ENCODE measurements at regions of chr14 and their contacts with region 1.

Region 1: GRCh38 chr14:106417224-106418049 is 891.1 kb downstream of the TMEM121 start:
- DNase-seq: peak; percentile 92
- ATAC-seq: peak; percentile 92
- H3K4me3 Mint-ChIP-seq: no peak overlapping the region
- H3K27ac Mint-ChIP-seq: no peak overlapping the region
- H3K4me1 Mint-ChIP-seq: no peaks in the 10 kb centered on the region
- H3K27me3 Mint-ChIP-seq: peaks cover 16% of the 10 kb centered on the region

Region 2: DNA sequence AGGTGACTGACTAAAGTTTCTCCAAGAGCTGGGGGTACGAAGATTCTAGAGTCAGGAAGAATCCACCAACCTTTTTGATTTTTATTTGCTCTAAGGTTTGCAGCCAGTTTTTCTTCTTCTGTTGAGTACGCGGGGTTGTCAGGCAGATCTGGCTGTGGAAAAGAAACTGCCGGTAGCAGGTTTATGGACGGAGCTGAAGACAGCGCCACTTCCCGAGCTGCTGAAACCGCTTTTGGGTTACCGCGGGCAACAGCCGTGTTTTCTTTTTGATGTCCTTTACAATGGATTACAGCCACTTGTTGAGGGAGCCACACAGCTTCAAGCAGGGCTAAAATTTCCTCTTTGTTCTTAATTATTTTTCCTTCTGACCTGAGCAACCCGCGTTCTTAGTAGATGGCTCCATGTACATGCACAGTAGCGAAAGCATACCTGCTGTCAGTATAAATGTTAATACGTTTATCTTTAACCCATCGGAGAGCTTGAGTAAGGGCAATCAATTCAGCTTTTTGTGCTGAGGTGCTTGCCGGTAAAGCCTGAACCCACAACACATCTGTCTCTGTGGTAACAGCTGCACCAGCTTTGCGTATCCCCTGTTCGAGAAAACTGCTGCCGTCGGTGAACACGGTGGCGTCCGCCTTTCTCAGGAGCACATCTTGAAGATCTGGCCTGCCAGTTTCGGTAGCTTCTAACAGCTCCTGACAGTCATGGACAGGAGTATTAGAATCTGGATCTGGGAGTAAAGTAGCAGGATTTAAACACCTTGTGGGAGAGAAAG is 216.7 kb before region 1 on chr14:
- CTCF ChIA-PET with region 1: no interaction called
- POLR2A ChIA-PET with region 1: no interaction called
- DNase-seq: peak; percentile 44
- ATAC-seq: peak; percentile 63
- H3K4me3 Mint-ChIP-seq: peak overlapping the region; percentile 48
- H3K27ac Mint-ChIP-seq: peak overlapping the region; percentile 46
- H3K4me1 Mint-ChIP-seq: peaks cover 18% of the 10 kb centered on the region
- H3K27me3 Mint-ChIP-seq: peaks cover 24% of the 10 kb centered on the region

Region 3: GRCh38 chr14:106347890-106348755 is 69.3 kb before region 1 on chr14:
- CTCF ChIA-PET with region 1: interaction called, 36 read pairs
- POLR2A ChIA-PET with region 1: no interaction called
- DNase-seq: no peak
- ATAC-seq: no peak
- H3K4me3 Mint-ChIP-seq: no peak overlapping the region
- H3K27ac Mint-ChIP-seq: no peak overlapping the region
- H3K4me1 Mint-ChIP-seq: peaks cover 16% of the 10 kb centered on the region
- H3K27me3 Mint-ChIP-seq: peaks cover 39% of the 10 kb centered on the region

Region 4: DNA sequence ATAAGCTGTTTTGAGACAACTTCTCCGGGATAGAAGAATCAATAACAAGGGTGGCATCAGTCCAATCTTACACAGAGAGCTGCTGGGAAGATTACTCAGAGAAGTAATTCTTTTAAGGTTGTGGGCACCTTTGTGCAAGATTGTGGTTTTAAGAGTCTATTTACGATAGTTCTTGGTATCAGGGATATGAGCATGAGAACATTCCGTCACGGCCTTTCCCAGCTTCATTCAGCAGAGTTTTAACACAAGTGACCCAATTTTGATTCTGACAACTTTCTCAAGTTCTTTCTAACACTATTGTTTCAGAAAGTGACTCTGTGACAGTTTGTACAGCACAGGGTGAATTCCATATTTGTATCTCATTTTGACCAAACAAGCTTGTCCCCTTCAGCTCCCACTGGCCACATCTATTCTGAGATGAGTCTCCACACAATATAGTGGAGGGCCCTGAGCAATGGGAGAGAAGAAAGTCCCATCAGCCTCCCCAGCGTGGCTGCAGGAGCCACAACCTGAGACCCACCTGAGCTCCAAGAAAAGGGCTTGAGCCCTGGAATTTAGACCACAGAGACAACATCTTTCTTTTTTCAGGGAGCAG is 21.9 kb before region 1 on chr14:
- CTCF ChIA-PET with region 1: interaction called, 53 read pairs
- POLR2A ChIA-PET with region 1: no interaction called
- DNase-seq: no peak
- ATAC-seq: no peak
- H3K4me3 Mint-ChIP-seq: peak overlapping the region; percentile 53
- H3K27ac Mint-ChIP-seq: peak overlapping the region; percentile 73
- H3K4me1 Mint-ChIP-seq: peaks cover 45% of the 10 kb centered on the region
- H3K27me3 Mint-ChIP-seq: peaks cover 20% of the 10 kb centered on the region

Region 5: DNA sequence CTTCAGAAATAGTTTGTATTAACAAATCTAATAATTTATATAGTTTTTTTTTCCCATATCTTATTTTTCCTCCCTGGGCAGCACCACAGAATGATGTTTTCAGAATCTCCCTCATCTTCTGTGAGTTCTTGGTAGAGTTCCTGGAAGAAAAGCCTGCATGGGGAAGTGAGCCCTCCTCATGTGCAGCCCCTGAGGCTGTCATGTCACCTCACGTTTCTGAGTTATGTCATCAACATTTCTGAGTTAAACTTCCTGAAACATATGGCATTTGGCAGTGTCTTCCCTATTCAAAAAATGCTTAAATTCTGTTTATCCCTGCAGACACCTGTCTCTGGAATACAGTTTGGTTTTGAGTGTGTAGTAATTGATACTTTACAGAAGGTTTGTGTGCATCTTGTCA is 87.9 kb after region 1 on chr14:
- CTCF ChIA-PET with region 1: interaction called, 115 read pairs
- POLR2A ChIA-PET with region 1: no interaction called
- DNase-seq: no peak
- ATAC-seq: no peak
- H3K4me3 Mint-ChIP-seq: no peak overlapping the region
- H3K27ac Mint-ChIP-seq: no peak overlapping the region
- H3K4me1 Mint-ChIP-seq: peaks cover 61% of the 10 kb centered on the region
- H3K27me3 Mint-ChIP-seq: peaks cover 23% of the 10 kb centered on the region

Region 6: DNA sequence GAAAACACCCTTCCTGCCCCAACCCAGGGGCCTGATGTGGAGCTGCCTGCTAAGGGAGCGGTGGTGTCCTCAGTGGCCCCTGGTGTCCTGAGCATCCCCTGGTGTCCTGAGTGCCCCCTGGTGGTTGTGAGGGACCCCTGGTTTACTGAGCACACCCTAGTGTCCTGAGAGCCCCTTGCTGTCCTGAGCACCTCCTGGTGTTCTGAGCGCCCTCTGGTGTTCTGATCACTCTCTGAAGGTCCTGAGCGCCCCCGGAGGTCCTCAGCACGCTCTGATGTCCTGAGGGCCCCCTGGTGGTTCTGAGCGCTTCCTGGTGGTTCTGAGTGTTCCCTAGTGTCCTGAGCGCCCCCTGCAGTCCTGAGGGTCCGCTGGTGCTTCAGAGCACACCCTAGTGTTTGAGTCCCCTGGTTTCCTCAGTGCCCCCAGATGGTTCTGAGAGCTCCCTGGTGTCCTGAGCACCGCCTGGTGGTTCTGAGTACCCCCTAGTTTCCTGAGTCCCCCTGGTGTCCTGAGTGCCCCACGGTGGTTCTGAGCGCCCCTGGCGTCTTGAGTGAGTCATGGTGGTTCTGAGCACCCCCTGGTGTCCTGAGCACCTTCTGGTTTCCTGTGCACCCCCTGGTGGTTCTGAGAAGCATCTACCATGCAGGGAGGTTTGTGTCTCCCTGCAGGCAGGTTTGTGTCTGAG is 113.1 kb after region 1 on chr14:
- CTCF ChIA-PET with region 1: interaction called, 240 read pairs
- POLR2A ChIA-PET with region 1: no interaction called
- DNase-seq: peak; percentile 43
- ATAC-seq: peak; percentile 69
- H3K4me3 Mint-ChIP-seq: no peak overlapping the region
- H3K27ac Mint-ChIP-seq: no peak overlapping the region
- H3K4me1 Mint-ChIP-seq: peaks cover 5% of the 10 kb centered on the region
- H3K27me3 Mint-ChIP-seq: peaks cover 33% of the 10 kb centered on the region

Region 7: DNA sequence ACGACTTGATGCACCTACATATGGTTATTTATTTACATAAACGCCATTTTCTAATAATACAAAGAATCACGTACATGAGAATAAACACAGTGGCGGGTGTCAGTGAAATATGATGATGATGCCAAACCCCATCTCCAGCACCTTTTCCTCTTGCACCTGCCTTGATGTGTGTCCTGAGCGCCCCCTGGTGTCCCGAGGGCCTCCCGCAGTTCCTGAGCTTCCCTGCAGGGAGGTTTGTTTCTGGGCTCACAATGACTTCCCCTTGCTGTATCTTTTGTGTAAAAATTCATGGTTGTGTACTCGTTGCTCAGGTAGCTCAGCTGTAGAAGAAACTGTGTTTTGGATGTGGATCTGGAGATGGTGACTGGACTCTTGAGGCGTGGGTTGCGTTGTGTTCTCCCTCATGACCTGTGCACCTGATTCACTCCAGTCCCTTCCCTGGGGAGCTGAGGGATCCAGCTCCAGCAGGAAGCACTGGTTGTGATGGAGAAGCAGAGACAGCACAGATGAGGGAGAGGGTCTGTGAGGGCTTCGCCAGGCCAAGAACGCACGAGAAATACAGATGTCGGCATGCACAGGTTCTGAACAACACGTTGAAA is 146.7 kb after region 1 on chr14:
- CTCF ChIA-PET with region 1: interaction called, 29 read pairs
- POLR2A ChIA-PET with region 1: no interaction called
- DNase-seq: peak; percentile 79
- ATAC-seq: peak; percentile 77
- H3K4me3 Mint-ChIP-seq: no peak overlapping the region
- H3K27ac Mint-ChIP-seq: no peak overlapping the region
- H3K4me1 Mint-ChIP-seq: no peaks in the 10 kb centered on the region
- H3K27me3 Mint-ChIP-seq: peaks cover 35% of the 10 kb centered on the region

Region 8: DNA sequence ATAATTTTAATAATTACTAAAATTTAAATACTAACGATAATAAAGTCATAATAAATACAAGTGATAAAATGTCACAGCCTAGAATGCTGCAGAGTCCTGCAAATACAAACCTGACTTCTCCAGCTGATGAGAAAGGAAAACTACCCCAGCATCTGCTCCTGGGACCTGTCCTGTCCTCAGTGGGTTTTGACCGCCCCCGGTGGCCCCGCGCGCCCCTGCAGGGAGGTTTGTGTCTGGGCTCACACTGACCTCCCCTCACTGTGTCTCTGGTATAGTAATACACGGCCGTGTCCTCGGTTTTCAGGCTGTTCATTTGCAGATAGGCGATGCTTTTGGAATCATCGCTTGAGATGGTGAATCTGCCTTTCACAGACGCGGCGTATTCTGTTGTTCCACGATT is 248.4 kb after region 1 on chr14:
- CTCF ChIA-PET with region 1: interaction called, 32 read pairs
- POLR2A ChIA-PET with region 1: no interaction called
- DNase-seq: no peak
- ATAC-seq: no peak
- H3K4me3 Mint-ChIP-seq: no peak overlapping the region
- H3K27ac Mint-ChIP-seq: no peak overlapping the region
- H3K4me1 Mint-ChIP-seq: peaks cover 12% of the 10 kb centered on the region
- H3K27me3 Mint-ChIP-seq: peaks cover 44% of the 10 kb centered on the region